Endothelial cell of umbilical vein (primary cell): ENCODE measurements at regions of chr16 and their contacts with region 1.

Region 1: DNA sequence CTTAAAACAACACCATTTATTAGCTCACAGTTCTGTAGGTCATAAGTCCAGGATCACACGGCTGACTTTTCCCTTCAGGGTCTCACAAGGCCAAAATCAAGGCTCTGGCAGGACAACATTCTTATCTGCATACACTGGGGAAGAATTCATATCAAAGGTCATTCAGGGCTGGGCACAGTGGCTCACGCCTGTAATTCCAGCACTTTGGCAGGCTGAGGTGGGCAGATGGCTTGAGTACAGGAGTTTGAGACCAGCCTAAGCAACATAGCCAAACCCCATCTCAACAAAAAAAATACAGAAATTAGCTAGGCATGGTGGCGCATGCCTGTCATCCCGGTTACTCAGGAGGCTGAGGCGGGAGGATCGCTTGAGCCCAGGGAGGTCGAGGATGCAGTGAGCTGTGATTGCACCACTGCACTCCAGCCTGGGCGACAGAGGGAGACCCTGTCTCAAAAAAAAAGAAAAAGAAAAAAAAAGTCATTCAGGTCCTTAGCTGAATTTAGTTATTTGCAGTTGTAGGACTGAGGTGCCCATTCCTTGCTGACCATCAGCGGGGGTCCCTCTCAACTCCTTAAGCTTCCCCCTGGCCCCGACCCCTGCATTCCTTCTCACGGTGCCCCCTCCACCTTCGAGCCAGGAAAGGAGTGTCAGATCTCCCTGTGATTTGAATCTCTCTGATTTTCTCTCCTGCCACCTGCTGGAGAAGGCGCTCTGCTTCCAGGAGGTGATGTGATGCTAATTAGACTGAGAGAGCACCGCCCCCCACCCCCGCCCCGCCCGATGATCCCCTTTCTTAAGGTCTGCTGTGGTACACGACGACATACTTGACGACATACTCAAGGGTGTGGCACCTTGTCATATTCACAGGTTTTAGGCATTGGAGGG is 91.8 kb upstream of the CLEC18A start:
- DNase-seq: peak; percentile 40
- H3K4me3 ChIP-seq: no peak overlapping the region
- H3K27ac ChIP-seq: no peak overlapping the region
- H3K4me1 ChIP-seq: peaks cover 11% of the 10 kb centered on the region
- H3K27me3 ChIP-seq: no peaks in the 10 kb centered on the region
- CTCF ChIP-seq: peak in 1 of 2 donors; percentile 41
- POLR2A ChIP-seq: no peak

Region 2: GRCh38 chr16:69796351-69797118 is 62.8 kb before region 1 on chr16:
- CTCF ChIA-PET with region 1: interaction called, 11 read pairs
- POLR2A ChIA-PET with region 1: no interaction called
- dilution Hi-C with region 1: no loop called
- intact Hi-C with region 1: loop called (anchors 1 kb)
- DNase-seq: peak; percentile 71
- H3K4me3 ChIP-seq: no peak overlapping the region
- H3K27ac ChIP-seq: no peak overlapping the region
- H3K4me1 ChIP-seq: no peaks in the 10 kb centered on the region
- H3K27me3 ChIP-seq: no peaks in the 10 kb centered on the region
- CTCF ChIP-seq: peak; percentile 73 to 74
- POLR2A ChIP-seq: no peak

Region 3: GRCh38 chr16:70018254-70018653 is 158.9 kb after region 1 on chr16:
- CTCF ChIA-PET with region 1: no interaction called
- POLR2A ChIA-PET with region 1: no interaction called
- dilution Hi-C with region 1: no loop called
- intact Hi-C with region 1: no loop called
- DNase-seq: peak; percentile 29
- H3K4me3 ChIP-seq: no peak overlapping the region
- H3K27ac ChIP-seq: no peak overlapping the region
- H3K4me1 ChIP-seq: peaks cover 10% of the 10 kb centered on the region
- H3K27me3 ChIP-seq: no peaks in the 10 kb centered on the region
- CTCF ChIP-seq: peak in 1 of 2 donors; percentile 25
- POLR2A ChIP-seq: no peak

Region 4: GRCh38 chr16:70490261-70490803 is 631.0 kb after region 1 on chr16:
- CTCF ChIA-PET with region 1: no interaction called
- POLR2A ChIA-PET with region 1: no interaction called
- dilution Hi-C with region 1: no loop called
- intact Hi-C with region 1: no loop called
- DNase-seq: no peak
- H3K4me3 ChIP-seq: no peak overlapping the region
- H3K27ac ChIP-seq: no peak overlapping the region
- H3K4me1 ChIP-seq: no peaks in the 10 kb centered on the region
- H3K27me3 ChIP-seq: no peaks in the 10 kb centered on the region
- CTCF ChIP-seq: no peak
- POLR2A ChIP-seq: no peak